PC-9 (cell line): ENCODE measurements at regions of chr6 and their contacts with region 1.

Region 1: DNA sequence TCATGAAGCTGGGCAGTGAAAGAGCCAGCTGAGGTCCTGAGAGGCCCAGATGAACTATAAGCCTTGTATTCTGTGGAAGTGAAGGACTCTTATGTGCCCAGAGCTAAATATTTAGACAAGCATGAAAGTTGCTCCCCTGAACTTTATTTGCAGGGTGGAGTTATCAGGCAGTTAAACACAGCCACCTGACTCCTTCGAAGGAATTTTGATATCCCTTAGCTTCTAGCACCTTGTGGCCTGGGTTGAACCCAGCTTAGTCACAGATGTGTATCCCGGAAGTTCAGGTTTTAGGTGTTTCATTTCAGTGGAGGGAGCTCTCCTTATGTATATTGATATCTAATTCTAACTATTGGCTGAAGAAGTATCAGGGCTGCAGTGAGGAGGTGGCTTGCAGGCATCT is 20.4 kb downstream of the NR2E1 start:
- DNase-seq: peak in 1 of 2 experiments; percentile 72
- H3K4me3 ChIP-seq: no peak overlapping the region
- H3K27ac ChIP-seq: no peak overlapping the region
- H3K4me1 ChIP-seq: peaks cover 9% of the 10 kb centered on the region; the same call in 1 of the 2 replicates
- H3K27me3 ChIP-seq: no peaks in the 10 kb centered on the region
- CTCF ChIP-seq: no peak

Region 2: GRCh38 chr6:108097882-108098281 is 88.3 kb before region 1 on chr6:
- CTCF ChIA-PET with region 1: no interaction called
- POLR2A ChIA-PET with region 1: no interaction called
- intact Hi-C with region 1: no loop called
- DNase-seq: peak in 1 of 2 experiments; percentile 43
- H3K4me3 ChIP-seq: no peak overlapping the region
- H3K27ac ChIP-seq: no peak overlapping the region
- H3K4me1 ChIP-seq: no peaks in the 10 kb centered on the region
- H3K27me3 ChIP-seq: no peaks in the 10 kb centered on the region
- CTCF ChIP-seq: no peak

Region 3: GRCh38 chr6:108113557-108114519 is 72.4 kb before region 1 on chr6:
- CTCF ChIA-PET with region 1: no interaction called
- POLR2A ChIA-PET with region 1: interaction called, 11 read pairs
- intact Hi-C with region 1: no loop called
- DNase-seq: peak; percentile 23 to 59
- H3K4me3 ChIP-seq: 0 out of 2 replicates have a peak overlapping the region, but pooled peaks have one; percentile 8
- H3K27ac ChIP-seq: no peak overlapping the region
- H3K4me1 ChIP-seq: no peaks in the 10 kb centered on the region
- H3K27me3 ChIP-seq: peaks cover 5% of the 10 kb centered on the region; the same call in 1 of the 2 replicates
- CTCF ChIP-seq: peak; percentile 87

Region 4: DNA sequence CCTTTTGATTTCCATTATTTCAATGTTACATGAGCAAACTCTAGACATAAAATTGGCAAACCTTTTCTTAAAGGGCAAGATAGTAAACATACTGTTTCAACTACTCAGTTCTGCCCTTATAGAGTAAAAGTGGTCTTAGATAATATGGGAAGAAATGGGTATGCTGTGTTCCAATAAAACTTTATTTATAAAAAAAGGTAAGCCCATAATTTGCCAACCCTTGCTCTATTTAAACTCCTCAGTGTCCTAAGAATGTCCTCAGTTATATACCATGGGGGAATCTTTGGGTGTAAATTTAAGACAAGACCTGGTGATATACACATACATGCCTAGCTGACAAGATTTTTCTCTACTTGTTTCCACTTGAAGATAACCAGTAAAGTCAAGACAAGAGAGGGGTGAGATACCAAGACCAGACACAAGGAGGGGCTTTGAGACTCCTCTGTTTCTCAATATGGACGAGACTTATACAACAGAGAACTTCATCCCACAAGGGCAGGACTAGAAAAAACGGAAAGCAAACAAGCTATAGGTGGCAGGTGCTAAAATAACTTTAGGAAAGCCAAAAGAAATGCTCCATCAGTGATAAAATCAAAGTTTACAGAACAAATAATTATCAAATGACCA is 64.1 kb after region 1 on chr6:
- CTCF ChIA-PET with region 1: no interaction called
- POLR2A ChIA-PET with region 1: interaction called, 16 read pairs
- intact Hi-C with region 1: no loop called
- DNase-seq: no peak
- H3K4me3 ChIP-seq: no peak overlapping the region
- H3K27ac ChIP-seq: no peak overlapping the region
- H3K4me1 ChIP-seq: no peaks in the 10 kb centered on the region
- H3K27me3 ChIP-seq: no peaks in the 10 kb centered on the region
- CTCF ChIP-seq: peak; percentile 44; the same call in 1 of the 2 replicates